ENCODE measurements at regions of chr3 and their contacts with region 1.

Region 1: GRCh38 chr3:157572559-157573270 is 69.5 kb upstream of the VEPH1 start:
- DNase-seq: no peak
- H3K4me3 ChIP-seq: no peak overlapping the region
- H3K27me3 ChIP-seq: no peaks in the 10 kb centered on the region
- CTCF ChIP-seq: peak; percentile 73

Region 2: DNA sequence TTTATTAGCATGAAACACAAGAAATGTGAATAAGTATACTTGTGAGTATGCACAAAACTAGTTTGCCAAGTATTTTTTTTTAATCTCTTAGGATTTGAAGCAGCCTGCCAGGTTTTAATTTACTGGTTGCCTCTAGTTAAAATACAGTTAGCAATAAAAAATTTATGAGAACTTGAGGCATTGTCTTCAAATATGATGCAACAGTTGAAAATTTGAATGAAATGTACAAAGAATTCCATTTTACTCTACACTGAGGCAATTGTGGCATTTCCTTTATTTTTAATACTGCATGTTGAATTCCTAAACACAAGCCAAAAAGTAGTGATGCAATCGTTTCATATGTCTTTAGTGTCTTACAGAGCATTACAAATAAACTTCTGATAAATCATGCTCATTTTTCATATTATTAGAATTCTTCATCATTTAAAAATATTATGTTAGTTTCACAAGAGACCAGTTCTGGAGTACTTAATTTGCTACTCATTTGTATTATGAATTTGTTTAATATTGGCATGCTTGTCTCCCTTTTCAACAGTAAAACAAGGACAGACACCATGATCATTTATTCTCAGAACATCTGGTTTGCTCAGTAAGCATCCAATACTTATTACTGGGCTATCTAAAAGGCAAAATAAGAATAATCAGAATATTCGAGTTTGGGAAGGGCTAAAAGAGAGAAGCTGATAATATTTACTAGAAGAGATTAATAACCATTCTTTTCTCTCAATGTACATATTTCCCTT is 260.9 kb before region 1 on chr3:
- CTCF ChIA-PET with region 1: no interaction called
- POLR2A ChIA-PET with region 1: no interaction called
- DNase-seq: peak; percentile 97
- H3K4me3 ChIP-seq: no peak overlapping the region
- H3K27me3 ChIP-seq: no peaks in the 10 kb centered on the region
- CTCF ChIP-seq: no peak

Region 3: DNA sequence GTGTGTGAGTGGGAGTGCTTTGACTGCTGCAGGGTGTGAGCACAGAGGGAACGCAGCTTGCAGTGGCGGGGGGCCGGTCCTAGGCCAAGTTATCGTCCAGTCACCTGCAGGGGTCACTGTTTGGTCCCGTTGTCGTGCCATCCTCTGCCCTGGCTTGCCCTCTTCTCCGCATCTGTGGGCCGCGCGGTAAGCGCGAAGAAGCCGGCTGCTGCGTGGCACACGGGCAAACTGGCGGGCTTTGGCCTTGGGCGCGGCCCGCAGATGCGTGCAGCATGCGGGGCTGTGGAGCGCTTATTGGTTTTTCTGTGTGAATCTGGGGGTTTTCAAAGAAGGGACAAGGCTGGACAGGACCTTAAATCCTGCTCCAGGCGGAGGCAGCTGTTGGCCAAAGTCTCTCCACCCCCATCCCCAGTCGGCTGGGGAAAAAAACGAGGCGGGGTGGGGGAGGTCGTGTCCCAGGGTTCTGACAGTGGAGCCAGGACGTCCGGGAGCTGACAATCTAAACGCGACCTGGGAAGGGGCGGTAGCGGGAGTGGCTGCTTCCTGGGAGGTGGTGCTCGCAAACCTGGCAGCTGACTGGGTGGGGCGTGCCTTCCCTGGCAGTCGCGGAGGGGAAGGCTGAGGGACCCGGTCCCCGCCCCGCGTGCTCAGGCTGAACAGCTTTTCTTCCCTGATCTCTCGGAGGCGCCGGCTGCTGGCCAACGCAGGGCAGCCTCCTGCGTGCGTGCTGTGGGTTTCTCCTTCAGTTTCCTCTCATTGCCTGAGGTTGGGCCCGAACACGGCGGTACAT is 29.8 kb before region 1 on chr3:
- CTCF ChIA-PET with region 1: interaction called, 16 read pairs
- POLR2A ChIA-PET with region 1: no interaction called
- DNase-seq: no peak
- H3K4me3 ChIP-seq: peak overlapping the region; percentile 49
- H3K27me3 ChIP-seq: no peaks in the 10 kb centered on the region; the same call in 1 of the 2 replicates
- CTCF ChIP-seq: peak; percentile 55

Region 4: GRCh38 chr3:157551961-157552360 is 20.8 kb before region 1 on chr3:
- CTCF ChIA-PET with region 1: interaction called, 16 read pairs
- POLR2A ChIA-PET with region 1: no interaction called
- DNase-seq: no peak
- H3K4me3 ChIP-seq: no peak overlapping the region
- H3K27me3 ChIP-seq: no peaks in the 10 kb centered on the region
- CTCF ChIP-seq: no peak

Region 5: DNA sequence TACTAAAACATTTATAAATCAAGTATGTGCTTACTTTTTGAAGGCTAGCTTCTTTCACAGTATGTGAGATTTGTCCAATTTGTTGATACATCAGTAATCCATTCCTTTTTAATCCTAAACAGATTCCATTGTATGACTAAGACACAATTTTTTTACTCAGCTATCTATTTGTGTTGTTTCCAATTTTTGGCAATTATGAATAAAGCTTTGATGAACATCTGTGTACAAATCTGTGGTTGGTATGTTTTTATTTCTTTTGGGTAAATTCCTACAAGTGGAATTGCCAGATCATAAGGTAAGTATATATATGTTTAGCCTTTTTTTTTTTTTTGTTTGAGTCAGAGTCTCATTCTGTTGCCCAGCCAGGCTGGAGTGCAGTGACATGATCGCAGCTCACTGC is 13.3 kb before region 1 on chr3:
- CTCF ChIA-PET with region 1: interaction called, 11 read pairs
- POLR2A ChIA-PET with region 1: no interaction called
- DNase-seq: no peak
- H3K4me3 ChIP-seq: no peak overlapping the region
- H3K27me3 ChIP-seq: no peaks in the 10 kb centered on the region
- CTCF ChIP-seq: no peak

Region 6: DNA sequence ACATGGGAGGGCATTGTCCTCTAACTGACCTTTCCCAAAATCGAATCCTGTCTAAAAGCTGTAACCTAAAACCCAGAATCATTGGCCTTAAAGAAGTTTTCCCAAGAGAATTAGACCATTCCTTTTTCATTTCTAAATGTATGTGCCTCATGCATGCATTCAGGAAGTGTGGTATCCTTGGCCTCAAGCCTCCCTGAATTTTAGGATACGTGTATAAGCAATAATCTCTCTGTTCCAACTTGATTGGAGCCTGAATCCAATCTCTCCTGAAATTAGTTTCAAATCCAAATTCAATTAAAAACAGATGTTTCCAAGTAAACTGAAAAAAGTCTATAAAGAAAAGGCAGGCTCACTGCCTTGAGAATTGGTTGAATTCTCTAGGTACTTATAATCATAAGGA is 16.5 kb after region 1 on chr3:
- CTCF ChIA-PET with region 1: interaction called, 10 read pairs
- POLR2A ChIA-PET with region 1: no interaction called
- DNase-seq: no peak
- H3K4me3 ChIP-seq: no peak overlapping the region
- H3K27me3 ChIP-seq: peaks cover 4% of the 10 kb centered on the region; the same call in 1 of the 2 replicates
- CTCF ChIP-seq: no peak